ENCODE measurements at regions of chr6 and their contacts with region 1.

Region 1: GRCh38 chr6:797479-798077 is 104.6 kb upstream of the EXOC2 start:
- DNase-seq: no peak
- H3K4me3 ChIP-seq: no peak overlapping the region
- H3K27ac ChIP-seq: no peak overlapping the region
- H3K4me1 ChIP-seq: no peaks in the 10 kb centered on the region
- H3K27me3 ChIP-seq: no peaks in the 10 kb centered on the region
- CTCF ChIP-seq: peak; percentile 32 to 63 (median 61)

Region 2: DNA sequence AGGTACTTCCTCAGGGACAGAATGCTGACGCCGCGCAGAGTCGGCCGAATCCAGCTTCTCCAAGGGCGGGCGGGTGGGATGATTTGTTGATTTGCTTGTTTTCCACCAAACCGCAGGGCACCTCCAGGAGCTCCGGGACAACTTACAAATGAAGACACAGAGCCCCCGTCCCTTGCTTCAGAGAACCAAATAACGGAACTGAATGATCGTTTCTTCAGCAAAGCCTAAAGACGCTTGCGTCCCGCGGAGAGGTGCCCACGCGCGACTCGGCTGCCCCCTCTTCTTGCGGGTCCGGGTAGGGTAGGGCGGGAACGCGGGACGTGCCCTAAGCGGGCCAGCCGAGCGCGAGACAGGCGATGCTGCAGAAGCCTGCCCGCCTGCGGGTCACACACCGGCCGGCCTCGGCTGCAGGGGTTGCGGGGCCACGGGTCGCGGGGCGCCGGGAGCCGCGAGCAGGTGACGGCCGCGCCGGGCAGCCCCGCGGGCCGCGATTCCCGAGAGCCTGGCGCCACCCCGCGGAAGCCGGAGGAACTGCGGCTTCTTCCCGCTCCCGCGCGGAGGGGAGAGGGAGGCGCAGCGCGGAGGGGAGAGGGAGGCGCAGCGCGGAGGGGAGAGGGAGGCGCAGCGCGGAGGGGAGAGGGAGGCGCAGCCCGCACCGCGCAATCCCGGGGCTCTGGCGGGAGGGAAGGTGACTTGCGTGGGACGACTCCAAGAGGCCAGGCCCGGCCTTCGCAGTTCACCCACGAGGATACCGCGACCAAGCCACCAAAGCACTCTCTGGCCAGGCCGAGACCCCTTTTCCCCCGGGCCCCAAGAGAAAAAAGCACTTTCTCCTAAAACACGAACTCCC is 584.1 kb after region 1 on chr6:
- intact Hi-C with region 1: loop called (anchors 1 kb)
- DNase-seq: no peak
- H3K4me3 ChIP-seq: peak overlapping the region; percentile 47 to 49
- H3K27ac ChIP-seq: no peak overlapping the region
- H3K4me1 ChIP-seq: peaks cover 21 to 22% of the 10 kb centered on the region in 2 donors
- H3K27me3 ChIP-seq: peaks cover 51% of the 10 kb centered on the region
- CTCF ChIP-seq: peak; percentile 47 to 66 (median 64)

Region 3: DNA sequence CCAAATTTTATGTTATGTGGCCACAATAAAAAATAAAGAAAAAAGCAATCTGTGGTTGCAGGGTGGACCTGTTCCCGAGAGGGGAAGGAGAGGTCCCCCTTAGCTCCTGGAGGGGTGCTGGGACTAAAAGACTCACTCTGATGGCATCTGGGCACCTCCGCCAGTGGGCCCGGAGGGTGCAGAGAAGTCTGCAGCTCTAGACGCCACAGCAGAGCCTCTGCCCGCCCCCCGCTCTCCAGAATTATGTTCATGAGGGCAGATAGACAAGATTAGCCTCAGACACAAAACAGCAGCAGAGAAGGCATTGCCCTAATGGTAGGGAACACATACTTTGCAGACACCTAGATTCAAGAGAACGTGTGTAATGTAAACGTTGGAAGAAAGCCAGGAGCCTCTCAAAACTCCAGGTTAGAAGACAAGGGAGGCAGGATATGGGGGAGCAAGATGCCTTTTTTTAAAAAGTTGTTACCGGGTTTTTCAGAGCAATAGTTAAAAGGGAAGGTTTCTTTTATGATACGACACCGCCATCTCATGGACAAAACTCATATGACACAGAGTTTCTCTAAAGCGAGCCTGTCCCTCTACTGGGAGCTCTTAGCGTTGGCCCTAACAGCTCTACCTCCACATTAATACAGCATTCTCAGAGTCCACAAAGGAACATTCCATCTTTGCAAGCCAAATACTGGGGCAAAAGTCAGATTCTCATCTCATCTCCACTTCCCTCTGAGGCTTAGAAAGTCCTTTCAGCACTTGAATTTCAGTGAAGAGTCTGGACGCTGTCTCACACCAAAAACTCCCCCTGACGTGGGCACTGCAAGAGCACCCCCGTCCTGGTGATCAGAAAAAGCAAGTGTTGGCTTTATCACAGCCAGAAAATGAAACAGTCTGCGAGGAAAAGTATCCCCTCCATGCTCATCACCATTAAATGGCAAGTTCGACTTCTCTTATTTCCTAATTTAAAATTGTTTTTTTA is 639.0 kb after region 1 on chr6:
- intact Hi-C with region 1: loop called (anchors 5 kb)
- DNase-seq: no peak
- H3K4me3 ChIP-seq: no peak overlapping the region
- H3K27ac ChIP-seq: no peak overlapping the region
- H3K4me1 ChIP-seq: no peaks in the 10 kb centered on the region
- H3K27me3 ChIP-seq: no peaks in the 10 kb centered on the region
- CTCF ChIP-seq: peak; percentile 57 to 78 (median 69)